Activated T-helper 1 cell treated with anti-CD3 and anti-CD28 coated beads, Interleukin-12 subunit alpha, Interleukin-12 subunit beta, Interleukin-2, Interleukin-4 antibody, amounts not matched to agents 30 ng/mL and 10 ng/mL and 1 ng/mL, durations not matched to agents 14 hours and 24 hours and 36 hours (primary cell): ENCODE measurements at regions of chr19 and their contacts with region 1.

Region 1: GRCh38 chr19:57578487-57579205 is at the start of gene ZNF416:
- DNase-seq: peak; percentile 94
- H3K4me3 Mint-ChIP-seq: peak within 1 kb of the TSS; percentile 80
- H3K27ac Mint-ChIP-seq: peak within 1 kb of the TSS; percentile 74
- H3K4me1 Mint-ChIP-seq: peaks cover 18% of the 10 kb centered on the region
- H3K27me3 Mint-ChIP-seq: no peaks in the 10 kb centered on the region
- total RNA-seq, gene ZNF416: 3.2 and 3.7 TPM in 2 replicates

Region 2: DNA sequence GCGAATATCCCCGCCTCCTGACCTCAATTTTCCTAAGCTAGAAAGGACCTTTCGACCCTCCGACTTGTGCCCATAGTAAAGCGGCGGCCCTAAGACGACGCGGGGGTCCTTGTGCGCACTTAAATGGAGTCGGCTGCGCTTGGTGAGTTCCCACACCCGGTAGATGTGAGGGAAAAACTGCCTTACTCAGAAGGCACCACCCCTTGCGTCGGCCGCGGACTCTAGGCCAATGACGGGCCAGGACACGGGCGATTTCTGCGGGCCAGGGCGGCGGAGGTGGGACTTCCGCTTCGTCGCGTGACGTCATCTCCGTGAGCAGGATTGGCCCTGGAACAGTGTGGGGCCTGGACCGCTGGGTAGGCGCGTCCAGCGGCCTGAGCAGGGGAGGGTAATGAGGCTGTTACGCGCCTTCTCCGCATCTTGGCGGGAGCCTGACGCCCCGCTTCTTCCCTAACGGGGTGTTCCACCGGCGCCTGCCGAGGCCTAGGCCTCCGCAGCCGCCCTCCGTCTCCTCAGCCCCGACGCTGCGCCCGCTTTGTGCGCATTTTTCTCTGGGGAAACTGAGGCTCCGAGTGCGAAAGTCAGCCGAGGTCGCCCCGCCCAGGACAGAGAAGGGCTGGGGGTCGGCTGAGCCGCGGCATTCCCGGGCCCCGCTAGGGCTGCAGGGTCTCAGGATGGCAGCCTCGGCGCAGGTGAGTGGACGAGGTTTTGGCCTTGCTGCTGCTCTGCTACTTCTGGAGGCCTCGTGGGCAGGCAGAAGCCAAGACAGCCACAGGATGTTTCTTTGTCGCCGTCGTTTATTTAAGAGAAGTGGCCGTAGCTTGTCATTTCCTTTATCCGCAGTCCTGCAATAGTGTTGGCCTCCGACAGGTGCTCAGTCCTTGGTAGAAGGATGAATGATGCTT is 258.2 kb before region 1 on chr19 and contains the start of gene ZNF543:
- intact Hi-C with region 1: loop called (anchors 1 kb)
- DNase-seq: peak; percentile 90
- H3K4me3 Mint-ChIP-seq: peak within 1 kb of the TSS; percentile 89
- H3K27ac Mint-ChIP-seq: peak within 1 kb of the TSS; percentile 97
- H3K4me1 Mint-ChIP-seq: peaks cover 28% of the 10 kb centered on the region
- H3K27me3 Mint-ChIP-seq: peaks cover 14% of the 10 kb centered on the region
- total RNA-seq, gene ZNF543: 5.1 and 5.4 TPM in 2 replicates

Region 3: GRCh38 chr19:57410877-57411671 is 167.6 kb before region 1 on chr19 and contains the start of gene ZNF17:
- intact Hi-C with region 1: loop called (anchors 1 kb)
- DNase-seq: peak; percentile 87
- H3K4me3 Mint-ChIP-seq: peak within 1 kb of the TSS; percentile 95
- H3K27ac Mint-ChIP-seq: peak within 1 kb of the TSS; percentile 81
- H3K4me1 Mint-ChIP-seq: peaks cover 18% of the 10 kb centered on the region
- H3K27me3 Mint-ChIP-seq: no peaks in the 10 kb centered on the region
- total RNA-seq, gene ZNF17: 7.9 and 11.0 TPM in 2 replicates

Region 4: DNA sequence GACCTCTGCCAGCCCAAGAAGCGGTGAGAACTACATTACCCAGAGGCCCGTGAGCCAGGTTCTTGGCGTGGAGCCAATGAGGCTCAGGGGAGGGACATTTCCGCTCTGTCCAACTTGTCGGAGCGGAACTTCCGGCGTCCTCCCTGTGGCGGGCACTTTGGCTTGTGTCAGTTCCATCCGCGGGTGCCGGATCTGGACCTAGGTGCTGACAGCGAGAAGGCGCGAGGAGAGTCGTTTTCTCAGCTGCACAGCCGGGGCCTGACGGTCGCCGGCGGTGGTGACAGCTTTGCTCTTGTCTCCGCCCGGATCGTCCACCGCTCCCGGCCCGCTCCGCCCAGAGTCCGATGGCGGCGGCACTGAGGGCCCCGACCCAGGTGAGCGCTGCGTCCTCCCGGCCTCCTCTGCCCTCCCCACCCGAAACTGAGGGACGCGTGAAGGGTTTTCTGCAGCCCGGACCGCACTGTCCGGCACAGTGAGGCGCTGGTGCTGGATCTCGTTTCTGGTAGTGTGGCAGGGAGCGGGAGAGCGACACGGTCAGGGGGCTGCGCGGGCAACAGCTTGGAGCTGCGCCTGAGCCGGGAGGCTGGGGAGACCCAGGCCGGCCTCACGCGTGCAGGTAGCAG is 21.2 kb after region 1 on chr19 and contains the start of gene ZNF530:
- intact Hi-C with region 1: loop called (anchors 1 kb)
- DNase-seq: peak; percentile 78
- H3K4me3 Mint-ChIP-seq: peak within 1 kb of the TSS; percentile 85
- H3K27ac Mint-ChIP-seq: peak within 1 kb of the TSS; percentile 58
- H3K4me1 Mint-ChIP-seq: peaks cover 16% of the 10 kb centered on the region
- H3K27me3 Mint-ChIP-seq: no peaks in the 10 kb centered on the region
- total RNA-seq, gene ZNF530: 5.4 and 7.3 TPM in 2 replicates

Region 5: DNA sequence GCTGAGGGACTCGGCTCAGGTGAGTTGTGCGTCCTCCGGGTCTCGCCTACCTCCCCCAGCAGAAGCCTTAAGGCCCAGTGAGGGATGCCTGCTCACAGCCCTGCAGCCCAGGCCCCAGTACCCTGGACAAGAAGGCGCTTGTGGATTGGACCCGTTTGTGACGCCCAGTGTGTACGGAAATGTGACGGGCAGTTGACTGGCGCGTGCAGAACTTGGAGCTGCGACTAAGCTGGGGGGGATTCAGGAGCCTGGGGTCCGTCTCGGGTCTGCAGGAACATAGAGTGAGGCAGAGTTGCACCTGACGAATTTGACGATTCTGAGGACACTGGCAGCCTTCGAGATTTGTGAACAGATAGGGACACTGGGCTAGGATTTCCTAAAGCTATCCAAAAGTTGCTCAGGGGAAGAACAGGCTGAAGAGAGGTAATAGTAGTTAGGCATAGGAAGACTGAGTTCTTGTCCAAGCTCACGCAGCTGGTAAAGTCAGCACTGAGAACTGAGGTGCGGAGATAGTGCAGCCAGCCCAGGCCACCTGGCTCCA is 103.7 kb after region 1 on chr19:
- intact Hi-C with region 1: loop called (anchors 1 kb)
- DNase-seq: no peak
- H3K4me3 Mint-ChIP-seq: peak overlapping the region; percentile 96
- H3K27ac Mint-ChIP-seq: peak overlapping the region; percentile 92
- H3K4me1 Mint-ChIP-seq: peaks cover 22% of the 10 kb centered on the region
- H3K27me3 Mint-ChIP-seq: no peaks in the 10 kb centered on the region

Region 6: GRCh38 chr19:57819475-57820148 is 241.0 kb after region 1 on chr19:
- intact Hi-C with region 1: loop called (anchors 2 kb)
- DNase-seq: peak; percentile 76
- H3K4me3 Mint-ChIP-seq: peak overlapping the region; percentile 99
- H3K27ac Mint-ChIP-seq: peak overlapping the region; percentile 98
- H3K4me1 Mint-ChIP-seq: peaks cover 50% of the 10 kb centered on the region
- H3K27me3 Mint-ChIP-seq: no peaks in the 10 kb centered on the region

Region 7: GRCh38 chr19:58154679-58155648 is 576.3 kb after region 1 on chr19:
- intact Hi-C with region 1: loop called (anchors 1 kb)
- DNase-seq: peak; percentile 89
- H3K4me3 Mint-ChIP-seq: peak overlapping the region; percentile 76
- H3K27ac Mint-ChIP-seq: peak overlapping the region; percentile 55
- H3K4me1 Mint-ChIP-seq: peaks cover 4% of the 10 kb centered on the region
- H3K27me3 Mint-ChIP-seq: no peaks in the 10 kb centered on the region